PC-9 (cell line): ENCODE measurements at regions of chr15 and their contacts with region 1.

Region 1: DNA sequence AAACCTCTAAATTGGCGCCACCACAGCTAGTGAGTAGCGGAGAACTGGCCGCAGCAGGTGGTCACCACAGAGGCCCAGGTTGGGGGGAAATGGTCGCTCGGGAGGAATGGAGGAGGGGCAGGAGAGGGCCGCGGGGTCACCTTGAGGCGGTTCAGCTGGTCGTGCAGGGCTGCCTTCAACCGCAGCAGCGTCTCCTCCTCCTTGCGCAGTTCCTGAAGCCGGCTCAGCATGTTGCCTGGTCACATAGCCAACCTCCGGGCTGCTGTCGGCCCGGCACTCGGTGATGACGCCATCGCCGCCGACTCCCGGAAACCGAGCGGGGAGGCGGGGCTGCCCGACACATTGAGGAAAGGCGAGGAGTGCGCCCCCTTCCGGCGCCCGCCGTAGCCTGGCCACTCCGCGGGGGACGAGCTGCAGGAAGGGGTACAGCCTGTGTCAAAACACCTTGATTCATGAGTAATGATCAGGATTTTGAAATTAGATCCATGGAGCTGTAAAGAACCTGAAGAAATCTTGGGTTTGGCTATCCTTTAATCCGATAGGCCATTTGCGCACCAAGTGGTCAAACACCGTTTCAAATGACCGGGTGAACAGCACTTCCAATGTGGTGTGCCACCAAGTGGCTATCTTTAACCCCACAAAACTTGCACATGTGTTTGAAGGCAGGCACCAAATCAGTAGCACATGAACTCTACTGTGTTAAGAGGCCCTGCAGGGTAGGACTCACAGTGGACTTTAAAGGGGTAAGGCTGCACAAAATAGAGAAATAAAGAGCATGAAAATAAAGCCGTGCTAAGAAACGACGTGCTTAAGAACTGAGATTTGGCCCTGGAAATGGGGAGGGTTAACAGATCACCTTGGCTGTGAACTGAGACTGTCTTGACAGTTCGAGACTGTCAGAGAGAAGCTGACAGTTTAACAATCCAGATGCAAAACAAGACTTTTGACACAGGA is at the start of gene SNAPC5:
- DNase-seq: peak; percentile 88 to 96
- H3K4me3 ChIP-seq: peak within 1 kb of the TSS; percentile 91
- H3K27ac ChIP-seq: peak within 1 kb of the TSS; percentile 77
- H3K4me1 ChIP-seq: peaks cover 24% of the 10 kb centered on the region
- H3K27me3 ChIP-seq: no peaks in the 10 kb centered on the region
- CTCF ChIP-seq: peak; percentile 89
- total RNA-seq, gene SNAPC5: 15.8 and 17.9 TPM in 2 replicates

Region 2: GRCh38 chr15:66153549-66154415 is 344.0 kb before region 1 on chr15:
- CTCF ChIA-PET with region 1: no interaction called
- POLR2A ChIA-PET with region 1: no interaction called
- intact Hi-C with region 1: no loop called
- DNase-seq: no peak
- H3K4me3 ChIP-seq: no peak overlapping the region
- H3K27ac ChIP-seq: no peak overlapping the region
- H3K4me1 ChIP-seq: no peaks in the 10 kb centered on the region
- H3K27me3 ChIP-seq: peaks cover 25% of the 10 kb centered on the region; the same call in 1 of the 2 replicates
- CTCF ChIP-seq: no peak

Region 3: GRCh38 chr15:66293419-66294156 is 204.2 kb before region 1 on chr15 and contains the start of gene DIS3L:
- CTCF ChIA-PET with region 1: interaction called, 3 read pairs
- POLR2A ChIA-PET with region 1: no interaction called
- intact Hi-C with region 1: loop called (anchors 2 kb)
- DNase-seq: peak in 1 of 2 experiments; percentile 52
- H3K4me3 ChIP-seq: peak within 1 kb of the TSS; percentile 52
- H3K27ac ChIP-seq: peak within 1 kb of the TSS; percentile 57
- H3K4me1 ChIP-seq: peaks cover 28% of the 10 kb centered on the region
- H3K27me3 ChIP-seq: no peaks in the 10 kb centered on the region
- CTCF ChIP-seq: no peak
- total RNA-seq, gene DIS3L: 27.7 and 31.2 TPM in 2 replicates

Region 4: DNA sequence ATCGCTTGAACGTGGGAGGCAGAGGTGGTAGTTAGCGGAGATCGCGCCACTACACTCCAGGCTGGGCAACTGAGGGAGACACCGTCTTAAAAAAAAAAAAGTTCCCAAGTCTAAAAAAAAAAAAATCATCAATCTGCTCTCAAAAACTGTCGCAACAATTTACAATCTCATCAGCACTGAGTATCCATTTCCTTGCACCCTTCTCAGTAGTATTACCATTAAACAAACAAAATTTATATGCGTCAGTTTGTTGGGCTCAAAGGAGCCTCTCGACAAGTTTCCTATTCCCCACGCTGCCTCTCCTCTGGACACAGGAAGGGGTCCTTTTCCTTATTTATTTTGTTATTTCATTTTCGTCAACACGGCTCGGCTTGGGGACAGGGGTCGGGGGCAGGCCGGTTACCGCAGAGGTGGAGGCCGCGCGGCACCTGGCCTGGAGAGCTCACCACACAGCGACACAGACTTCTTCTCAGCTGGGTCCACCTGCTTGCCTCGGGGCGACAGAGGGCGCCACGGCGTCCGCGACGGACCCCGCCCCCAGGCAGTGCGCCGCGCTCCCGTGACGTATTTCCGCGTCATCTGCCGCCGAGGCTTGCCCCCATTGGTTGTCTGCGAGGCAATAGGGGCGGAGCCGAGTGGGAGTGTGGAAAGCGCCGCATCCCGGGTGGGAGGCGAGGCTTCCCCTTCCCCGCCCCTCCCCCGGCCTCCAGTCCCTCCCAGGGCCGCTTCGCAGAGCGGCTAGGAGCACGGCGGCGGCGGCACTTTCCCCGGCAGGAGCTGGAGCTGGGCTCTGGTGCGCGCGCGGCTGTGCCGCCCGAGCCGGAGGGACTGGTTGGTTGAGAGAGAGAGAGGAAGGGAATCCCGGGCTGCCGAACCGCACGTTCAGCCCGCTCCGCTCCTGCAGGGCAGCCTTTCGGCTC is 111.3 kb before region 1 on chr15 and contains the start of gene MAP2K1:
- CTCF ChIA-PET with region 1: interaction called, 13 read pairs
- POLR2A ChIA-PET with region 1: no interaction called
- intact Hi-C with region 1: loop called (anchors 1 kb)
- DNase-seq: peak; percentile 82 to 98
- H3K4me3 ChIP-seq: peak within 1 kb of the TSS; percentile 62
- H3K27ac ChIP-seq: peak within 1 kb of the TSS; percentile 55
- H3K4me1 ChIP-seq: peaks cover 19% of the 10 kb centered on the region
- H3K27me3 ChIP-seq: no peaks in the 10 kb centered on the region
- CTCF ChIP-seq: no peak; the same call in 1 of the 2 replicates
- total RNA-seq, gene MAP2K1: 78.6 and 95.5 TPM in 2 replicates

Region 5: DNA sequence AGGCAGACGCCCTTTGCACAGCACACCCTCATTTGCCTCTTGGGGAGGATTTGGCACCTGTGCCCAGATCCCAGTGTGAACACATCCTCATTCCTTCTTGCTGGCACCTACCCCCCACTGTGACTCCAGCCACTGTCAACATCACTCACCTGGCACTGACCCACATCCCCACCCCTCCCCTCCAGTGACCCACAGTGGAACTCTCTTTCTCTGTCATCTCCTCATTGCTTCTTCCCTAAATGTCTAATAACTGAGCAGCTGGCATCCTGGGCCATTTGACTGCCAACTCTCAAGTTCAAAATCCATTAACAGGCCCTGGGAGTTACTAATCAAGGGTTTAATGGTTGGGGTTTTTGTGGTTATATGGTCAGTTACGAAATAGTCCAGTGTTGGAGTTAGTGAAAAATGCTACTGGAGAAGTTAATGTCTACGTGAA is 14.6 kb before region 1 on chr15:
- CTCF ChIA-PET with region 1: interaction called, 4 read pairs
- POLR2A ChIA-PET with region 1: no interaction called
- intact Hi-C with region 1: loop called (anchors 1 kb)
- DNase-seq: peak; percentile 89 to 94
- H3K4me3 ChIP-seq: no peak overlapping the region
- H3K27ac ChIP-seq: peak overlapping the region; percentile 72
- H3K4me1 ChIP-seq: peaks cover 47% of the 10 kb centered on the region
- H3K27me3 ChIP-seq: no peaks in the 10 kb centered on the region
- CTCF ChIP-seq: no peak

Region 6: DNA sequence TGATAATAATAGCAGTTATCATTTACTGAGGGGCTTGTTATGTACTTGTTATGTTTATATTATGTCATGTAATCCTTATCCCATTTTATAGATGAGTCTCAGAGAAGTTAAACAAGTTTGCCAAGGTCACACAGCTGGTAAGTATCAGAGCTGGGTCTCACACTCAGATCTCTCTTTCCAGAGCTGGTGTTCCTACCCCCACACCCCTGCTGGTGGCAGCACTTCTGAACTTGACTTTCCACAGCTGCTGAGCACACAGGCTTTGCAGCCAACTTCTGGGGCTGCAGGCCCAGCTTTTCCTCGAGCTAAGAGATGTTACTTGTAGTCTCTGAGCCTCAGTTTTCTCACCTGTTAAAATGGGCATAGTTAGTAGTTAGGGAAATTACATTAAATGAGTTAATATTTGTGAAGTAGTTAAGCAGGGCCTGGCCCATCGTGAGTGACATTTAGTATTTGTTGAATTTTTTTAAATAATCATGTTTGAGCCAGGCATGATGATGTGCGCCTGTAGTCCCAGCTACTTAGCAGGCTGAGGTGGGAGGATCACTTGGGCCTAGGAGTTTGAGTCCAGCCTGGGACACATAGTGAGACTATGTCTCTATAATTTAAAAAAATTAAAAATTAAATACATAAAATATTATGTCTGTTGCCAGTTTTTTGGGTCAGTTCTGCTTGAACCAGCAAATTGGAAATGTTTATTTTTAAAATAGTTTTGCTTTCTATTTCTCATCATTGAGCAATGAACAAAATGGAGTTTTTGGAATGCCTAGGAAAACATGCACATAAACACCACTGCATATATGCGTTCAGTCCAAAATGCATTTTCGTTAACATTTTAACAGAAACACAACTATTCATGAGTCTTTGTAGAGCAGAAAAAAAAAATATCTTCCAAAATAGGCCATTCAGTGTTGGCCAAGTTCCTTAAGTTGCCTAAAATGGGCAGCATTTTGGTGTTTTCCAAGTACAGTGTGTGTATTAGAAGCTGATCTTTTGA is 291.5 kb after region 1 on chr15:
- CTCF ChIA-PET with region 1: no interaction called
- POLR2A ChIA-PET with region 1: no interaction called
- intact Hi-C with region 1: no loop called
- DNase-seq: no peak
- H3K4me3 ChIP-seq: no peak overlapping the region
- H3K27ac ChIP-seq: no peak overlapping the region
- H3K4me1 ChIP-seq: no peaks in the 10 kb centered on the region
- H3K27me3 ChIP-seq: no peaks in the 10 kb centered on the region
- CTCF ChIP-seq: peak; percentile 59

Region 7: GRCh38 chr15:66835321-66835878 is 337.6 kb after region 1 on chr15:
- CTCF ChIA-PET with region 1: no interaction called
- POLR2A ChIA-PET with region 1: no interaction called
- intact Hi-C with region 1: no loop called
- DNase-seq: no peak
- H3K4me3 ChIP-seq: no peak overlapping the region
- H3K27ac ChIP-seq: peak overlapping the region; percentile 43
- H3K4me1 ChIP-seq: peaks cover 60% of the 10 kb centered on the region
- H3K27me3 ChIP-seq: no peaks in the 10 kb centered on the region
- CTCF ChIP-seq: no peak